ENCODE measurements at regions of chr20 and their contacts with region 1.

Region 1: DNA sequence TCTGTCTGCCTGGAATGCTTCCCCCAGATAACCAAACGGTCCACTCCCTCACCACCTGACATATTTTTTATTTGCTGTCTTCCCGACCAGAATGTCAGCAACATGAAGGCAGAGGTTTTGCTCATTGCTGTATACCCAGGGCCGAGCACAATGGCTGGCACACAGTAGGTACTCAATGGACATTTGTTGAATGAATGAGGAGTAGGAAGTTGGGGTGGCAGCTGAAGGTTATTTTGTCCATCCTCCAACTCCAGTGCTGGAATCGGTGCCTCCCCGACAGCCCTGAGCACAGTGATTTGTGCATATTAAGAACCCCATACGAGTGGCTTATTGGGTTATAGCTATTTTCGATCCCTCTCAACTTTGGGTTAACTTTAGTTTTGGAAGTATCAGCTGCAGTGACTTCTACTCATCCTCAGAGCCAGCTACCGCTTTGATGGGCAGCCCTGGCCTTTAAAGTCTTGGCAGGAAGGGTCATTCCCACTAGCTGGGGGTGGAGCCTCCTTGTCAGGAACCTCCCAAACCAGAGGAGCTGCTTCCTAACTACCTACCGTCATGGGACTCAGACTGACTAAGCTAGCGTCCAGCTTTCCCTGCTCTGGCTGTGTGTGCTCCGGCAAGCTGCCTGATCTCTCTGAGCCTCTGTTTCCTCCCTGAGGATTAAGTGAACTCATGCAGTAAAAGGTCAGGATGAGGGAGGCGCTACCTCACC is 10.2 kb downstream of the DUSP15 start:
- DNase-seq: peak in 2 of 5 donors; percentile 40
- ATAC-seq: peak in 3 of 4 donors; percentile 65 to 74 (median 73)
- H3K4me3 ChIP-seq: peak overlapping the region in 7 of 12 donors; percentile 49 to 80 (median 61)
- H3K27ac ChIP-seq: no peak overlapping the region
- H3K4me1 ChIP-seq: peaks cover 4 to 22% (median 13%) of the 10 kb centered on the region in 12 donors
- H3K27me3 ChIP-seq: peaks cover 0 to 34% (median 2%) of the 10 kb centered on the region in 9 donors
- CTCF ChIP-seq: no peak
- POLR2A ChIP-seq: no peak

Region 2: DNA sequence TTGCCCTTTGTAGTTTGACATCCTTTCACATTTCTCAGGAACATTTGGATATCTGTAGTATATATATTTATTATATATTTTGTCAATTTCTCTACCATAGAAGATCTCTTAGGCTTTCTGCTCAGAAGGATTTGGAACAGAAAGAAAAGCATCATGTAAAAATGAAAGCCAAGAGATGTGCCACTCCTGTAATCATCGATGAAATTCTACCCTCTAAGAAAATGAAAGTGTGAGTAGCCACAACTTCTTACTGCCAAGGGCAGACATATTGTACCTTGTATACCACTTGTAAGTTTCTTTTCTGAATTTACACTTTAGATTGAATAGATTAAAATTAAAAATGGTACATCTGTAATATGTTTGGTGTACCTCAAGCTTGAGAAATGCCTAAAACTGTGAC is 89.9 kb before region 1 on chr20:
- intact Hi-C with region 1: no loop called
- DNase-seq: no peak
- ATAC-seq: no peak
- H3K4me3 ChIP-seq: no peak overlapping the region
- H3K27ac ChIP-seq: no peak overlapping the region
- H3K4me1 ChIP-seq: no peaks in the 10 kb centered on the region
- H3K27me3 ChIP-seq: no peaks in the 10 kb centered on the region
- CTCF ChIP-seq: no peak
- POLR2A ChIP-seq: no peak

Region 3: DNA sequence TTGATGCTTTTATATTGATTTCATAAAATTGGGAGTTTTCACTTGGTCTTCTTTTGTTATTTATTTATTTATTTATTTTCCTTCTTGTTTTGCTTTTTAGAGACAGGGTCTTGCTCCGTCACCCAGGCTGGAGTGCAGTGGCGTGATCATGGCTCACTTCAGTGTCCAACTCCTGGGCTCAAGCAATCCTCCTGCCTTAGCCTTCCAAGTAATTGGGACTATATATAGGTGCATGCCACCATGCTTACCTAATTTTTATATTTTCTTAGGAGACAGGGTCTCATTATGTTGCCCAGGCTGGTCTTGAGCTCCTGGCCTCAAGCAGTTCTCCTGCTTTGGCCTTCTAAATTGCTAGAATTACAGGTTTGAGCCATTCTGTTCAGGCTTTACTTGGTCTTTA is 79.3 kb before region 1 on chr20:
- intact Hi-C with region 1: no loop called
- DNase-seq: no peak
- ATAC-seq: no peak
- H3K4me3 ChIP-seq: no peak overlapping the region
- H3K27ac ChIP-seq: no peak overlapping the region
- H3K4me1 ChIP-seq: no peaks in the 10 kb centered on the region
- H3K27me3 ChIP-seq: no peaks in the 10 kb centered on the region
- CTCF ChIP-seq: no peak
- POLR2A ChIP-seq: no peak

Region 4: DNA sequence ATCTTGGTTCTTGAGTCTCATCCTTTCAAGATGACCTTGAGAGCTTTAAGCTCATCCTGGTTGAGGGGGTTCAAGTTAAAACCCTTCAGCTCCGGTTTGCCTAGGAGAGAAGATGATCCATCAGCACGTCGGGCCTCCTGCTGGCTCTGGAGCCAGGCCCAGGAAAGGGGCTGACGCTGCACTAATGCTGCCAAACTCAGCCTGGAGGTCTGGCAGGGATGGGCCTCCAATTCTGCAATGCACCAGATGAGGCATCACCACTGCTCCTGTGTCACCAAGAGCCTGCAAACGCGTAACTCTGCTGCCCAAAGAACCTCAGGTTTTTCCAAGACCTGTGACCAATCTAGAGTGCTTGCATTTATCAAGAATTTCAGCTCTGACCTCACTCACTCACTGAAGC is 85.6 kb after region 1 on chr20:
- intact Hi-C with region 1: loop called in 1 of 10 experiments (anchors 2 kb)
- DNase-seq: no peak
- ATAC-seq: peak in 1 of 4 donors; percentile 32
- H3K4me3 ChIP-seq: no peak overlapping the region
- H3K27ac ChIP-seq: no peak overlapping the region
- H3K4me1 ChIP-seq: peaks cover 0 to 39% (median 15%) of the 10 kb centered on the region in 12 donors
- H3K27me3 ChIP-seq: no peaks in the 10 kb centered on the region
- CTCF ChIP-seq: no peak
- POLR2A ChIP-seq: no peak

Region 5: DNA sequence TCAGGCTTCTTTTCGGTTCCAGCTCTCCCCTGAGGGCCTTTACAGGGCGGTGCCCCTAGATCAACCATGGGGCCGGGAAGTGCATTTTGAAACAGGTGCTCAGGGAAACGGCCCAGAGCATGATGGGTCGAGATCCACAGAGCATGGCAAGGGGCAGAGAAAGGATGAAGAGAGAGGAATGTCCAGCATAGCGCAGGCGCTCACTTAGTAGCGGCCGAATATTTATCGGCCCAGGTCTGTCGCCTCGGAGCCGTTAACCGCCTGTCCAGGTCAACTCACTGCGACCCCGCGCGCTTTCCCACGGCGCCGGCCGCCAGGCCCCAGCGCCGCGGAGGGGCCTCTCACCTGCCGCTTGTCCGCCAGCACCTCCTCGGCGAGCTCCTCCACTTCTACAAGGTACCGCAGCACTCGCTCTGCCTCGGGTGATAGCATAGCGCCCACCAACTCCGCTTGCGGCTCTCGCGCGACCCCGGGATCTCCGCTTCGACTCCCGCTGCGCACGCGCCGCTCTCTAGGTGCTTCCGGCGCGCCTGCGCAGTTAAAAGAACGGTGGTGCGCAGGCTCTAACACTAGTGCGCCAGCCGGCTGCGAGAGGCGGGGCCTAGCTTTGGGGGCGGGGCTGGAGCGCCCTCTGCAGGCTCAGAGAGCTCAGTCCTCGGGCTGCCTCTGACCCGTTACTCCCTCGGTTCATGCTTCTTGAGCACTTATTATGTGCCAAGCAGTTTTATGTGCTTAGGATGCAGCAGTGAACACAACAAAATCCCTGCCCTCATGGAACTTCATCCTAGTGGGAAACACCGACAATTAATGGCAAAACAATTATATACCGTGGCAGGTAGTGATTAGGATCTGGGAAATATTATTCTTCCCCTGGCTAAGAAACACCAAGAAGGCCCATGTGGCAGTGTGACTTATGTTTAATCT is 91.6 kb after region 1 on chr20 and contains the start of gene PDRG1:
- intact Hi-C with region 1: loop called in 2 of 10 experiments (anchors 2 kb)
- DNase-seq: peak; percentile 94 to 98 (median 96)
- ATAC-seq: peak; percentile 96 to 99 (median 98)
- H3K4me3 ChIP-seq: peak within 1 kb of the TSS; percentile 65 to 100 (median 94)
- H3K27ac ChIP-seq: peak within 1 kb of the TSS in 11 of 12 donors; percentile 69 to 95 (median 85)
- H3K4me1 ChIP-seq: peaks cover 0 to 20% (median 15%) of the 10 kb centered on the region in 12 donors
- H3K27me3 ChIP-seq: peaks cover 0 to 8% (median 0%) of the 10 kb centered on the region in 9 donors
- CTCF ChIP-seq: peak; percentile 93 to 99 (median 97)
- POLR2A ChIP-seq: peak in 1 of 2 donors; percentile 89
- total RNA-seq, gene PDRG1: 5.2 to 10.7 (median 7.3) TPM

Region 6: DNA sequence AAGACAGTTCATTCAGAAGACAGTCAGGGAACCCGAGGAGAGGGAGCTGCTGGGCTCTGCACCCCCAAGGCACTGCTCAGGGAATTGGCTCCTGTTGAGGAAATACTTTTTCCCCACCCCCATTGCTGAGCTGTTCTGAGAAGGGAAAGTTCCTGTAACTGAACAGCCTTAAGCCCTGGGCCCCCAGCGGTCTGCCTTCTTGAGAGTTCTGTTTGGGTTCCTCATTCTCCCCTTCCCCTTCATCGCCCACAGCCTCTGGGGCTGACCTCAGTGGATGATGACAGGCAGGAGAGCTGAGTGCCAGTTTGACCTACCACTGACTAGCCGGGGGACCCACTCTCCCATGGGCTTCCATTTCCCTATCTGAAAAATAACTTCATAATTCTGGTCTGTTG is 202.6 kb after region 1 on chr20:
- intact Hi-C with region 1: no loop called
- DNase-seq: peak; percentile 54 to 77 (median 66)
- ATAC-seq: peak; percentile 42 to 90 (median 76)
- H3K4me3 ChIP-seq: peak overlapping the region in 1 of 12 donors; percentile 39
- H3K27ac ChIP-seq: peak overlapping the region in 4 of 12 donors; percentile 14 to 92 (median 26)
- H3K4me1 ChIP-seq: peaks cover 0 to 65% (median 0%) of the 10 kb centered on the region in 12 donors
- H3K27me3 ChIP-seq: peaks cover 0 to 23% (median 6%) of the 10 kb centered on the region in 9 donors
- CTCF ChIP-seq: no peak
- POLR2A ChIP-seq: no peak

Region 7: DNA sequence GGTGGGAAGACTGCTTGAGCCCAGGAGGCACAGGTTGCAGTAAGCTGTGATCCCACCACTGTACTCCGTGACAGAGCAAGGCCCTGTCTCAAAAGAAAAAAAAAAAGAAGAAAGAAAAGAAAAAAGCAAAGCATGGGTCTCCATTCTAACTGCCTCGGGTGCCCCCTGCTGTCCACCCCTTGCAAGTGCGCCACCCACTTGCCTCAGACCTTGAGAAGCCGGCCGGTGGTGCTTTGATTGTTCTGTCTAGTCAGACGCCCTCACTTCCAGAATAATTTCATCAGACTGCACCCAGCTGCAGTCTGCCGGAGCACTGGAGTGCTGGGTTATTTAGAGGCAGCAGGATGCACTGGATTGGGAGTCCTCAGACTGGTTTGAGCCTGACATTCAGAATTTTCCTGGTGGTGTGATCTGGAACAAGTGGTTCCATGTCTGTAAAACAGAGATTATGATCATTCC is 231.8 kb after region 1 on chr20:
- intact Hi-C with region 1: loop called in 3 of 10 experiments (anchors 10 kb)
- DNase-seq: peak; percentile 68 to 83 (median 75)
- ATAC-seq: peak in 3 of 4 donors; percentile 74 to 80 (median 78)
- H3K4me3 ChIP-seq: no peak overlapping the region
- H3K27ac ChIP-seq: no peak overlapping the region
- H3K4me1 ChIP-seq: peaks cover 0 to 5% (median 0%) of the 10 kb centered on the region in 12 donors
- H3K27me3 ChIP-seq: no peaks in the 10 kb centered on the region
- CTCF ChIP-seq: peak; percentile 82 to 96 (median 91)
- POLR2A ChIP-seq: no peak

Measured in heart left ventricle (tissue), 16 donors.